ENCODE measurements at regions of chr18 and their contacts with region 1.

Region 1: GRCh38 chr18:48675352-48675761 is 136.5 kb downstream of the CTIF start:
- DNase-seq: peak; percentile 89 to 90
- ATAC-seq: peak; percentile 85 to 94 (median 90)
- H3K4me3 ChIP-seq: no peak overlapping the region
- H3K27ac ChIP-seq: peak overlapping the region in 2 of 10 donors; percentile 12 to 57
- H3K4me1 ChIP-seq: peaks cover 11 to 72% (median 66%) of the 10 kb centered on the region in 9 donors
- H3K27me3 ChIP-seq: no peaks in the 10 kb centered on the region
- CTCF ChIP-seq: peak; percentile 91 to 98 (median 94)

Region 2: DNA sequence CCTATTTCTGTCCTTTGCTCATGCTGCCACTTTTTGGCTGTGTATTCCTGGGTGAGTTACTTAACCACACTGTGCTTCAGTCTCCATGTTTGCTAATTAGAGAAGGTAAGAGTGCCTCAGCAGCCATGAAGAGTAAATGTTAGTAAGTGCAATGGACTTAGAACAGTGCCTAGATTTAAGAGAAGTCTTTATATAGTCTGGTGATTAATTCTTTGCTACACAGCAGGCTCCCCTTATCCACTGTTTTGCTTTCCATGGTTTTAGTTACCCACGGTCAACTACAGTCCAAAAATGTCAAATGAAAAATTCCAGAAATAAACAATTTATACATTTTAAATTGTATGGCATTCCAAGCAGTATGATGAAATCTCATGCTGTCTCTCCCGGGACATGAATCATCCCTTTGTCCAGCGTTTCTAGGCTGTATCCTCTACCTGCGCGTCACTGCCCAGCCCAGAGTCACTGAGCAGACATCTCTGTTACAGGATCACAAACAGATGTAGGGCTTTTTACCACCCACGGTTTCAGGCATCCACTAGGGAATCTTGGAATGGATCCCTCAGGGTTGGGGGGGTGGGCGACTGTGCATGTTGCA is 45.5 kb before region 1 on chr18:
- intact Hi-C with region 1: no loop called
- DNase-seq: no peak
- ATAC-seq: no peak
- H3K4me3 ChIP-seq: no peak overlapping the region
- H3K27ac ChIP-seq: no peak overlapping the region
- H3K4me1 ChIP-seq: peaks cover 0 to 2% (median 0%) of the 10 kb centered on the region in 9 donors
- H3K27me3 ChIP-seq: no peaks in the 10 kb centered on the region
- CTCF ChIP-seq: no peak

Region 3: GRCh38 chr18:48777026-48777743 is 101.8 kb after region 1 on chr18:
- intact Hi-C with region 1: loop called in 8 of 10 experiments (anchors 2 to 10 kb)
- DNase-seq: peak in 1 of 2 donors; percentile 72
- ATAC-seq: peak in 6 of 8 donors; percentile 5 to 27 (median 18)
- H3K4me3 ChIP-seq: no peak overlapping the region
- H3K27ac ChIP-seq: peak overlapping the region in 4 of 10 donors; percentile 27 to 99 (median 60)
- H3K4me1 ChIP-seq: peaks cover 43 to 88% (median 70%) of the 10 kb centered on the region in 9 donors
- H3K27me3 ChIP-seq: no peaks in the 10 kb centered on the region
- CTCF ChIP-seq: peak; percentile 82 to 96 (median 90)

Region 4: DNA sequence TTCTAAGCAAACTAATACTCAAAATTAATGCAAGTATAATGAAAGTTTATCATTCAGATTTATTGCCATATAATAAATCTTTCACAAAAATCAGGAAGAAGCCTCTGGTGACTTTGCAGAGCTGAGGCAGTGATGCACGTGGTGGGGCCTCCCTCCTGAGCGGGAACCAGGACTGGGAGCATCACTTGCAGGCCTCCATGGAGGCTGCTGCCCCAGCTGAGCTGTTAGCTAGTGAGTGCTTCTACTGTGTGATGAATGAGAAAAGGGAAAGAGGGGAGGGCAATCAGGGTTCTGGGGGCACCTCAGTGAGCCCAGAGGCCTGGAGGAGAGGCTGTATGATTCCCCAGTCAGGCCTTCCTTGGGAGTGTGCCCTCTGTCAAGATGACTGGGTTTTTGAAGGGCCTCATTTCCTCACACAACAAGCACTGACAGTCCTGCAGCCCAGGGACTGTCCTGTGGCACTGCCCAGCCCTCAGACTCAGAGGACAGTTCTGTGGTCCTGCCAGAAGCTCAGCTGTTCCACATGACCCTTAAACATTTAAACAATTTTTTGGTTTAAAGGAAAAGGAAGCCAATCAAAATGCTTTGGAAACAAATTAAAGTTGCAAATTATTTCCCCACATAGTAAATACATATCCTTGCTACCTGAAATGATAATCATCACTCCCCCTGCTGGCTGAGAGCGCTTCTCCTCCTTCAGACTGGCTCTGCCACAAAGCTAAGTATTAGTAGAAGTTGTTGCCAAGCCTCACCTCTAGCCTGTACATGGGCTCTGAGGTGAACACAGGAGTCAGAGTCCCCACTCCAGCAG is 366.3 kb after region 1 on chr18:
- intact Hi-C with region 1: loop called in 7 of 10 experiments (anchors 1 to 5 kb)
- DNase-seq: peak; percentile 37 to 66
- ATAC-seq: peak; percentile 56 to 86 (median 71)
- H3K4me3 ChIP-seq: no peak overlapping the region
- H3K27ac ChIP-seq: peak overlapping the region in 1 of 10 donors; percentile 22
- H3K4me1 ChIP-seq: peaks cover 0 to 14% (median 8%) of the 10 kb centered on the region in 9 donors
- H3K27me3 ChIP-seq: no peaks in the 10 kb centered on the region
- CTCF ChIP-seq: peak; percentile 49 to 75 (median 69)

Region 5: DNA sequence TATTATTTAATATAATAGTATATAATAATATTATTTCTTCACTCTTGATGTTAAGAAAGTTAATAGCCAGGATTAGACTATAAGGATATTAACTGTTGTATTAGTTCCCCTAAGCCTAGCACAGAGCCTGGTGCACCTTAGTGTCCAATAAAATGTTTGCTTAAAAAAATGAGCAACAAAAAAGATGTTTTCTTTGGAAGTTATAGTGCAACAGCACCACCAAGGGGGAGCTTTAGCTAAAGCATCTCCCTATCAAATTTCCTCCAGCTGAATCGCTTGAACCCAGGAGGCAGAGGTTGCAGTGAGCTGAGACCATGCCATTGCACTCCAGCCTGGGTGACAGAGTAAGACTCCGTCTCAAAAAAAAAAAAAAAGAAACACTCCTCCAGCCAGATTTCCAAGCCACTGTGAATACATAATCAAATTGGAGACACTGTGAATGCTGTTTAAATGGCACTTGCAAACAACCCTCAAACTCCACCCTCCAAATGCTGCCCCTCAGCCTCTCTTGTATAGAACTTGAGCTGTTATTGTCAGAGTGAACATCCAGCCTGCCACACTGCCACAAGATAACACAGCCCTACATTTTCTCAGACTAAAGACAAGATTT is 563.2 kb after region 1 on chr18:
- intact Hi-C with region 1: loop called in 8 of 10 experiments (anchors 1 to 10 kb)
- DNase-seq: peak in 1 of 2 donors; percentile 10
- ATAC-seq: no peak
- H3K4me3 ChIP-seq: no peak overlapping the region
- H3K27ac ChIP-seq: no peak overlapping the region
- H3K4me1 ChIP-seq: peaks cover 0 to 6% (median 0%) of the 10 kb centered on the region in 9 donors
- H3K27me3 ChIP-seq: no peaks in the 10 kb centered on the region
- CTCF ChIP-seq: peak; percentile 10 to 56 (median 49)

Region 6: GRCh38 chr18:49412679-49413078 is 737.3 kb after region 1 on chr18:
- intact Hi-C with region 1: loop called in 8 of 10 experiments (anchors 5 to 10 kb)
- DNase-seq: no peak
- ATAC-seq: no peak
- H3K4me3 ChIP-seq: no peak overlapping the region
- H3K27ac ChIP-seq: peak overlapping the region in 4 of 10 donors; percentile 1 to 46 (median 6)
- H3K4me1 ChIP-seq: peaks cover 0 to 20% (median 12%) of the 10 kb centered on the region in 9 donors
- H3K27me3 ChIP-seq: no peaks in the 10 kb centered on the region
- CTCF ChIP-seq: no peak

Region 7: GRCh38 chr18:49858309-49859020 is 1183.1 kb after region 1 on chr18:
- intact Hi-C with region 1: loop called in 1 of 10 experiments (anchors 10 kb)
- DNase-seq: peak; percentile 44 to 58
- ATAC-seq: peak in 7 of 8 donors; percentile 40 to 73 (median 63)
- H3K4me3 ChIP-seq: no peak overlapping the region
- H3K27ac ChIP-seq: no peak overlapping the region
- H3K4me1 ChIP-seq: peaks cover 0 to 3% (median 0%) of the 10 kb centered on the region in 9 donors
- H3K27me3 ChIP-seq: peaks cover 0 to under 1% (median 0%) of the 10 kb centered on the region in 7 donors
- CTCF ChIP-seq: peak; percentile 83 to 97 (median 91)

Measured in heart right ventricle (tissue), 16 donors.